ENCODE measurements at regions of chr16 and their contacts with region 1.

Region 1: GRCh38 chr16:12067714-12068401 is 91.3 kb downstream of the SNX29 start:
- DNase-seq: peak; percentile 70
- H3K4me3 Mint-ChIP-seq: no peak overlapping the region
- H3K27ac Mint-ChIP-seq: no peak overlapping the region
- H3K4me1 Mint-ChIP-seq: peaks cover 4% of the 10 kb centered on the region
- H3K27me3 Mint-ChIP-seq: no peaks in the 10 kb centered on the region

Region 2: GRCh38 chr16:11407047-11407982 is 660.5 kb before region 1 on chr16:
- CTCF ChIA-PET with region 1: interaction called, 18 read pairs
- POLR2A ChIA-PET with region 1: no interaction called
- DNase-seq: peak; percentile 73
- H3K4me3 Mint-ChIP-seq: no peak overlapping the region
- H3K27ac Mint-ChIP-seq: no peak overlapping the region
- H3K4me1 Mint-ChIP-seq: peaks cover 2% of the 10 kb centered on the region
- H3K27me3 Mint-ChIP-seq: no peaks in the 10 kb centered on the region

Region 3: GRCh38 chr16:11851294-11852091 is 216.4 kb before region 1 on chr16 and contains the start of gene RSL1D1:
- CTCF ChIA-PET with region 1: interaction called, 12 read pairs
- POLR2A ChIA-PET with region 1: interaction called, 4 read pairs
- DNase-seq: peak; percentile 94
- H3K4me3 Mint-ChIP-seq: peak within 1 kb of the TSS; percentile 97
- H3K27ac Mint-ChIP-seq: peak within 1 kb of the TSS; percentile 90
- H3K4me1 Mint-ChIP-seq: peaks cover 61% of the 10 kb centered on the region
- H3K27me3 Mint-ChIP-seq: no peaks in the 10 kb centered on the region
- total RNA-seq, gene RSL1D1: 146 to 157 TPM

Region 4: GRCh38 chr16:11871193-11871592 is 196.7 kb before region 1 on chr16:
- CTCF ChIA-PET with region 1: no interaction called
- POLR2A ChIA-PET with region 1: no interaction called
- DNase-seq: no peak
- H3K4me3 Mint-ChIP-seq: no peak overlapping the region
- H3K27ac Mint-ChIP-seq: no peak overlapping the region
- H3K4me1 Mint-ChIP-seq: no peaks in the 10 kb centered on the region
- H3K27me3 Mint-ChIP-seq: no peaks in the 10 kb centered on the region

Region 5: DNA sequence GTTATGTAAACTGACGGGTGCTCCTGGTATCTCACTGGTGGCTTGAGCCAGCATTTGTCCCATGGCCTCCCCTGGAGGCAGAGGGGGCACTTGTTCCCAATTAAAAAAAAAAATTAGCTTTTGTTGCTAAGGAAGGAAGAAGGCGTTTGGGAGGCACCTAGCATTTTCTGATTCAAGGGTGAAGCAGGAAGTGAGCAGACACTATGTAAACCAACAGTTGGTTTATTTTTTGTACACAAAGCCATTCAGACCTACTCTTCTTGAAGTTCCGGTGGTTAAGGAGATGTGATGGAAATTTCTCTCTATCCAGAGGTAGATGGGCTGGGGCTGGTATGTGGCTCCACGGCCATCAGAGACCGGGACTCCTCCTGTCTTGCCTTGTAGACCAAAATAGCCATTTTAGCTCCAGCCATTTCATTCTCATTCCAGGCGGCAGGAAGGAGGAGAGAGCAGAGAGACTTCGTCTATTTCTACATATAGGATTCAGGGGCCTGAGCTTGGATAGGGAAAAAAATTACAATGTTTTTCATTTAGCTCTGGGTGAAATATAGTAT is 11.6 kb after region 1 on chr16:
- CTCF ChIA-PET with region 1: interaction called, 39 read pairs
- POLR2A ChIA-PET with region 1: interaction called, 5 read pairs
- DNase-seq: no peak
- H3K4me3 Mint-ChIP-seq: peak overlapping the region; percentile 64
- H3K27ac Mint-ChIP-seq: peak overlapping the region; percentile 99
- H3K4me1 Mint-ChIP-seq: peaks cover 79% of the 10 kb centered on the region
- H3K27me3 Mint-ChIP-seq: peaks cover 1% of the 10 kb centered on the region

Region 6: GRCh38 chr16:12095275-12096156 is 27.7 kb after region 1 on chr16:
- CTCF ChIA-PET with region 1: interaction called, 41 read pairs
- POLR2A ChIA-PET with region 1: no interaction called
- DNase-seq: peak; percentile 65
- H3K4me3 Mint-ChIP-seq: no peak overlapping the region
- H3K27ac Mint-ChIP-seq: no peak overlapping the region
- H3K4me1 Mint-ChIP-seq: peaks cover 4% of the 10 kb centered on the region
- H3K27me3 Mint-ChIP-seq: no peaks in the 10 kb centered on the region